CD4-positive, alpha-beta T cell (primary cell): ENCODE measurements at regions of chr16 and their contacts with region 1.

Region 1: DNA sequence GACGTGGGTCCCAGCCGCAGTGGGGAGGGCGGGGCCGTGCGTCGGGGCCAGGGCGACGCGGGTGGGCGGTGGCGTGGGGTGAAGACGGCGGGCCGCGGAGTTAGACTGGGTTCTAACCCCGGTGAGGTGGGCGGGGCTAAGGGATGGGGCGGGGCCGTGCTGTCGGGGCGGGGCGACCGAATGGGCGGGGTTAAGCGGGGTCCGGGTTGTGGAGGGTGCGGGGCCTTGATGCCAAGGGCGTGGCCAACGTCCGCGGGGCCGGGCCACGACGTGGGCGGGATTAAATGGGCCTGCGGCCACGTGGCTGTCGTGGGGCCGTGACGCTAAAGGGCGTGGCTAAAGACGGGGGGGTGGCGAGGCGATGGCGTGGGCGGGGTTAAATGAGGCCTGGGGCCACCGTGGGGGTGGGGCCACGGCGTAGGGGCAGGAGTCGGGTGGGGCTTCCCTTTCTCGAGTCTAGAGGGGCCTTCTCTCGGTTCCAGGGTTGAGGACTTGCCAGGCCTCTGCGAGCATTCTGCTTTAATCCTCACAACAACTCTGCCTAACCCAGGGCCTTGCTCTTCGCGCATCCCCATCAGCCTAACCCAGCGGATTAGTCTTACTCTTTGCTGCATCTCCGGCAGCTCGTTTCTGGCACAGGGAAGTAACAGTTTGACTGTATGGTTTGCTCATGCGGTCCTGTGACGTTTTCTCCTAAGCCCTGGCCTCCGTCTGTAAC is 739 bp downstream of the TCF25 start:
- DNase-seq: peak; percentile 88 to 98 (median 95)
- ATAC-seq: peak; percentile 78
- H3K4me3 ChIP-seq: peak overlapping the region; percentile 98
- H3K4me3 Mint-ChIP-seq: peak overlapping the region; percentile 87
- H3K27ac ChIP-seq: peak overlapping the region; percentile 99 to 100
- H3K27ac Mint-ChIP-seq: peak overlapping the region; percentile 79
- H3K4me1 ChIP-seq: peaks cover 23% of the 10 kb centered on the region
- H3K4me1 Mint-ChIP-seq: peaks cover 14% of the 10 kb centered on the region
- H3K27me3 ChIP-seq: no peaks in the 10 kb centered on the region
- H3K27me3 Mint-ChIP-seq: no peaks in the 10 kb centered on the region
- CTCF ChIP-seq: no peak

Region 2: GRCh38 chr16:89686520-89687091 is 187.5 kb before region 1 on chr16 and contains the start of gene CDK10:
- CTCF ChIA-PET with region 1: interaction called, 3 read pairs
- POLR2A ChIA-PET with region 1: interaction called, 11 read pairs
- intact Hi-C with region 1: no loop called
- DNase-seq: peak; percentile 72 to 92 (median 86)
- ATAC-seq: peak; percentile 91
- H3K4me3 ChIP-seq: peak within 1 kb of the TSS; percentile 87
- H3K4me3 Mint-ChIP-seq: peak within 1 kb of the TSS; percentile 94
- H3K27ac ChIP-seq: peak within 1 kb of the TSS; percentile 73 to 79
- H3K27ac Mint-ChIP-seq: peak within 1 kb of the TSS; percentile 78
- H3K4me1 ChIP-seq: peaks cover 20% of the 10 kb centered on the region
- H3K4me1 Mint-ChIP-seq: peaks cover 5% of the 10 kb centered on the region
- H3K27me3 ChIP-seq: no peaks in the 10 kb centered on the region
- H3K27me3 Mint-ChIP-seq: no peaks in the 10 kb centered on the region
- CTCF ChIP-seq: no peak
- total RNA-seq, gene CDK10: 58.9 to 62.8 TPM

Region 3: DNA sequence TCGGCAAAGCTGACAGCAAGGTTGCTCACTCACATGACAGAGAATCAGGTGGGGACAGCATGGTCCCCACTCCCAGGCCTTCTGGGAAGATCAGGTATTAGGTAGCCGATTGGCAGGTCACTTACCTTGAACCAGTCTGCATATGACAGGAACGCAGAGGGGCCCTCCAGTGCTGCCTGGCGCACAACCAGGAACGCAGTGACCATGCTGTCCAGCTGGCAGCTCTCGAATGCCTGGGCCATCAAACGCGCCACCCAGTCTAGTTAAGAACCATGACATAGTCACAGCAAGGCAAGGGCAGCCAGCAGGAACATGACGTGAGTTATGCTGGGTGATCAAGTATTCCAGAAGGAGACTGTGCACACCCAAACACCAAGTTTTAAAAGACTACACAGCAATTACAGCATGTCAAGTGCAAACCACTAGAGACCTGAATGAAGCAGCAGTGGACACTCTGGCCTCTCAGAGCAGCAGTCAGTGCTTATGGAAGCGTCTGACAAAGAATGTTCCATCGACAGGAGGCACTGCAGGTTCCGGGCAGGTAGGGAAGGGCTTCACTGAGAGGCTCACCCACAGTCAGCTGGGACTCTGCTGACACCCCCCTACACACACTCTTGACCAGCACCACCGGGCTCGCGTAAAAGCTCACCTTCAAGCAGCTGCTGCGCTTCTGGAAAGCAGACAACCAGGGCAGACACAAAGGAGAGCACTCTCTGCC is 82.7 kb before region 1 on chr16:
- CTCF ChIA-PET with region 1: no interaction called
- POLR2A ChIA-PET with region 1: no interaction called
- intact Hi-C with region 1: no loop called
- DNase-seq: no peak
- ATAC-seq: no peak
- H3K4me3 ChIP-seq: no peak overlapping the region
- H3K4me3 Mint-ChIP-seq: no peak overlapping the region
- H3K27ac ChIP-seq: no peak overlapping the region
- H3K27ac Mint-ChIP-seq: no peak overlapping the region
- H3K4me1 ChIP-seq: peaks cover 14% of the 10 kb centered on the region
- H3K4me1 Mint-ChIP-seq: peaks cover 15% of the 10 kb centered on the region
- H3K27me3 ChIP-seq: no peaks in the 10 kb centered on the region
- H3K27me3 Mint-ChIP-seq: no peaks in the 10 kb centered on the region
- CTCF ChIP-seq: no peak

Region 4: DNA sequence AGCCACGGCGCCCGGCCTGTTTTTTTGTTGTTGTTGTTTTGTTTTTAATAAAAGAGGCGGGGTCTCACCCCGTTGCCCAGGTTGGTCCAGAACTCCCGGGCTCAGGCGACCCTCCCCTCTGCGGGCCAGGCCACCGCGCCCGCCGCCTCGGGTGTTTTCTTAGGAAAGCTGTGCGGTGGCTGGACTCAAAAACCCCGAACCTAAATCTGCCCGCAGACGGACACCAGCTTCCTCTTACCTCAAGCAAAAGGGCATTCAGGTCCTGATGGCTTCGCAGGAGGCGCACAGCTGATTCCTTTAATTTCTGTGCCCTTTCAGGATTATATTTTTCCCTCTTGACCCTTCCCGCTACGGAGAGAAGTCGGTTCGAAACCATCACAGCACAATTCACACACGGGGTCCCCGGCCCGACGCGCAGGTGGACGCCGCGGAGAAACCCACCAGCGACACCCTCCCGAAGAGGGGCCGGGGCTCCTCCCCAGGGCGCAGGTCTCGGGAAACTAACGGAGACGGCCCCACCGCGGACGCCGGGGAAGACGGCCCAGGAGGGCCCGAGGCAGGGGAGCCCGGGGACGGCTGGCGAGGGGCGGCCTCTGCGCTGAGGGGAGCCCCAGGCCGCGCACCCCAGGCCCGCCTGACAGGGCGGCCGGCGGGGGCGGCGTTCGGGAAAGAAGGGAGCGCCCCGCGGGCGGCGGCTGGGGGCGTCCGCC is 58.3 kb before region 1 on chr16:
- CTCF ChIA-PET with region 1: no interaction called
- POLR2A ChIA-PET with region 1: interaction called, 10 read pairs
- intact Hi-C with region 1: loop called in 1 of 2 experiments (anchors 5 kb)
- DNase-seq: peak in 2 of 14 experiments; percentile 13 to 39
- ATAC-seq: peak; percentile 9
- H3K4me3 ChIP-seq: peak overlapping the region; percentile 64
- H3K4me3 Mint-ChIP-seq: peak overlapping the region; percentile 83
- H3K27ac ChIP-seq: no peak overlapping the region
- H3K27ac Mint-ChIP-seq: no peak overlapping the region
- H3K4me1 ChIP-seq: peaks cover 29% of the 10 kb centered on the region
- H3K4me1 Mint-ChIP-seq: peaks cover 29% of the 10 kb centered on the region
- H3K27me3 ChIP-seq: no peaks in the 10 kb centered on the region
- H3K27me3 Mint-ChIP-seq: no peaks in the 10 kb centered on the region
- CTCF ChIP-seq: no peak

Region 5: GRCh38 chr16:89972244-89973234 is 98.4 kb after region 1 on chr16:
- CTCF ChIA-PET with region 1: no interaction called
- POLR2A ChIA-PET with region 1: interaction called, 13 read pairs
- intact Hi-C with region 1: no loop called
- DNase-seq: peak; percentile 76 to 97 (median 91)
- ATAC-seq: peak; percentile 94
- H3K4me3 ChIP-seq: peak overlapping the region; percentile 96
- H3K4me3 Mint-ChIP-seq: peak overlapping the region; percentile 100
- H3K27ac ChIP-seq: peak overlapping the region; percentile 29 to 63
- H3K27ac Mint-ChIP-seq: peak overlapping the region; percentile 96
- H3K4me1 ChIP-seq: peaks cover 38% of the 10 kb centered on the region
- H3K4me1 Mint-ChIP-seq: peaks cover 35% of the 10 kb centered on the region
- H3K27me3 ChIP-seq: no peaks in the 10 kb centered on the region
- H3K27me3 Mint-ChIP-seq: no peaks in the 10 kb centered on the region
- CTCF ChIP-seq: no peak